CD14-positive monocyte (primary cell): ENCODE measurements at regions of chr22 and their contacts with region 1.

Region 1: GRCh38 chr22:27692243-27692642 is 109.3 kb downstream of the MN1 start:
- DNase-seq: no peak
- H3K4me3 ChIP-seq: no peak overlapping the region
- H3K4me3 Mint-ChIP-seq: no peak overlapping the region
- H3K27ac ChIP-seq: no peak overlapping the region
- H3K27ac Mint-ChIP-seq: no peak overlapping the region
- H3K4me1 ChIP-seq: no peaks in the 10 kb centered on the region
- H3K4me1 Mint-ChIP-seq: no peaks in the 10 kb centered on the region
- H3K27me3 ChIP-seq: no peaks in the 10 kb centered on the region
- H3K27me3 Mint-ChIP-seq: peaks cover 2 to 3% (median 2%) of the 10 kb centered on the region in 3 donors
- CTCF ChIP-seq: no peak

Region 2: GRCh38 chr22:27726697-27727449 is 34.6 kb after region 1 on chr22:
- intact Hi-C with region 1: loop called in 1 of 2 experiments (anchors 2 kb)
- DNase-seq: peak; percentile 84 to 93 (median 91)
- H3K4me3 ChIP-seq: no peak overlapping the region
- H3K4me3 Mint-ChIP-seq: peak overlapping the region in 1 of 2 donors; percentile 62
- H3K27ac ChIP-seq: peak overlapping the region; percentile 53 to 83
- H3K27ac Mint-ChIP-seq: peak overlapping the region; percentile 80 to 97 (median 94)
- H3K4me1 ChIP-seq: peaks cover 30 to 35% of the 10 kb centered on the region in 2 donors
- H3K4me1 Mint-ChIP-seq: peaks cover 38% of the 10 kb centered on the region
- H3K27me3 ChIP-seq: no peaks in the 10 kb centered on the region
- H3K27me3 Mint-ChIP-seq: peaks cover 0 to 8% (median 0%) of the 10 kb centered on the region in 3 donors
- CTCF ChIP-seq: no peak

Region 3: DNA sequence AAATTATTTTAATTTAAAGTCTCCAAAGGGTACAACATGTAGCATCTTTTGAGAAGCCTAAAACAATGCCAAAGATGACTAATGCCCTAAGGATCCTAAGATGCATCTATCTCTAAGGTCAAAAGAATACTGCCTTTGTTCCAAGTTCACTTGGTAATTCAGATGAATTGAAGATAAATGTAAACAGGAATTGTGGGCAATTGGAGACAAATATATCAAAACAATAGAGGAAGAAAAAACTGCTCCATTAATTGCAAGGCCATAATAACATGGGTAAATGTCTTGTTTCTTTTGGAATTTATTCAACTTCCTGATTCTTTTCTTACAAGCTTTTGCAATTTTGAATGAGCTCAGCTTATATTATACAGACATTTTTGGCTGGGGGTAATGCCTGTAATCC is 648.8 kb after region 1 on chr22:
- intact Hi-C with region 1: no loop called
- DNase-seq: no peak
- H3K4me3 ChIP-seq: no peak overlapping the region
- H3K4me3 Mint-ChIP-seq: no peak overlapping the region
- H3K27ac ChIP-seq: no peak overlapping the region
- H3K27ac Mint-ChIP-seq: no peak overlapping the region
- H3K4me1 ChIP-seq: no peaks in the 10 kb centered on the region
- H3K4me1 Mint-ChIP-seq: peaks cover 7% of the 10 kb centered on the region
- H3K27me3 ChIP-seq: no peaks in the 10 kb centered on the region
- H3K27me3 Mint-ChIP-seq: peaks cover 1 to 2% (median 2%) of the 10 kb centered on the region in 3 donors
- CTCF ChIP-seq: no peak